AG04450 (cell line): ENCODE measurements at regions of chr4 and their contacts with region 1.

Region 1: DNA sequence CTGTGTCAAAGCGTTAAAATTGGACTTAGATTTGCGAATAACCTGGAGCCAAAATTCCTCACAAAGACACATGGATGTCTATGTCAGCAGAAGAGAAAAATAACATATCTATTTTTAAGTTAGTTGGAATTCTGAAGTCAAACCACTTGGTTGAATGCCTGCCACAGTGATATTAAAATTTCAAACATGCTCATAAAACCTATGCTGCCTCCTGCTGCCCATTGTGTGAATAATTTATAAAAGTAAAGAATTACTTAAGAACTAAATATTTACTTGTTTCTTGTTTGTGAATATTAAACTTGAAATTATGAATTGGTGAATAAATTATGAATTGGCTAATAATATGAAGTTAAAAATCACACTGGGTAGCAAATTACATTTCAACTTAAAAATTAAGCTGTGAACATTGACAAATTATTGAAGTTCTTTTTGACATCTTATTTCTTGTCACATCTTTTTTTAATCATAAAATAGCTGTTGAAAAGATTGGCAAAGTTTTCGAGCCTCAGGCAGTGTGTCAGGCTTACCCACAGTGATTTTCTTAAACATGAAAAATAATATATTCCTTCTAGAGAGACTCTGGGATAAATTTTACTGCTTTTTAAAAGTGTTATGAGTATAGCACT is 35.4 kb downstream of the FABP2 start:
- DNase-seq: peak; percentile 42
- H3K4me3 ChIP-seq: no peak overlapping the region
- H3K27ac ChIP-seq: no peak overlapping the region
- H3K27me3 ChIP-seq: no peaks in the 10 kb centered on the region
- CTCF ChIP-seq: peak; percentile 65

Region 2: GRCh38 chr4:118981839-118982381 is 304.6 kb before region 1 on chr4:
- CTCF ChIA-PET with region 1: interaction called, 23 read pairs
- POLR2A ChIA-PET with region 1: no interaction called
- DNase-seq: peak; percentile 91
- H3K4me3 ChIP-seq: no peak overlapping the region
- H3K27ac ChIP-seq: no peak overlapping the region
- H3K27me3 ChIP-seq: no peaks in the 10 kb centered on the region
- CTCF ChIP-seq: peak; percentile 78

Region 3: GRCh38 chr4:118989098-118990080 is 297.1 kb before region 1 on chr4:
- CTCF ChIA-PET with region 1: interaction called, 10 read pairs
- POLR2A ChIA-PET with region 1: no interaction called
- DNase-seq: no peak
- H3K4me3 ChIP-seq: no peak overlapping the region
- H3K27ac ChIP-seq: peak overlapping the region; percentile 92
- H3K27me3 ChIP-seq: no peaks in the 10 kb centered on the region
- CTCF ChIP-seq: no peak

Region 4: DNA sequence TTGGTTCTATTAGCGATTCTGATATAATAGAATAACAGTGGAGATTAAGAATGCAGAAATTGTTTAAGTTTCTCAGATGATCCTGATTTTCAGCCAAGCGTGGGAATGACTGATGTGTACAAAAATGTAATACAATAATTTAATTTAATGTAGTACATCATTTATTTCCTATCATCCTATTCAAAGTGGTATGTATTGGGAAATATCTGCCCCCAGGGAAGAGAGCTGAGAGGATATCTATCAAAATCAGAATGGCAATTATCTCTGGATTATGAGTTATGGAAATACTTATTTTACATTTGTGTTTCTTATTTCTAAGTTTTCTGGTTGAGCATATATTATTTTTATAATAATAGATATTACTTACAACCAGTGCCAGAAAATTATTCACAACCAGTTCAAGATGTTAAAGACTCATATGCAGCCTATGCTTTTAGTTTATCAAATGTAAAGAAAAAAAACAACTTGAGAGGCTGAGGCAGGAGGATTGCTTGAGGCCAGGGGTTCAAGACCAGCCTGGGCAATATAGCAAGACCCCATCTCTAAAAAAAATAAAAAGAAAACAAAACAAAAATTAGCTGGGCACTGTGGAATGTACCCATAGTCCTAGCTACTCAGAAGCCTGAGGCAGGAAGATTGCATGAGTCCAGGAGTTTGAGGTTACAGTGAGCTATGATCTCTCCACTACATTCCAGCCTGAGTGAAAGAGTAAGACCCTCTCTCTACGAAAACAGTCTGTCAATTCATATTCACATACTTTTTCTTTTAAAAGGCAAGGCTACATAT is 31.7 kb after region 1 on chr4:
- CTCF ChIA-PET with region 1: no interaction called
- POLR2A ChIA-PET with region 1: no interaction called
- DNase-seq: no peak
- H3K4me3 ChIP-seq: no peak overlapping the region
- H3K27ac ChIP-seq: no peak overlapping the region
- H3K27me3 ChIP-seq: peaks cover 4% of the 10 kb centered on the region
- CTCF ChIP-seq: no peak

Region 5: GRCh38 chr4:119597377-119597776 is 310.9 kb after region 1 on chr4:
- CTCF ChIA-PET with region 1: interaction called, 16 read pairs
- POLR2A ChIA-PET with region 1: no interaction called
- DNase-seq: no peak
- H3K4me3 ChIP-seq: no peak overlapping the region; the same call in 1 of the 2 replicates
- H3K27ac ChIP-seq: no peak overlapping the region
- H3K27me3 ChIP-seq: no peaks in the 10 kb centered on the region
- CTCF ChIP-seq: no peak